ENCODE measurements at regions of chr4 and their contacts with region 1.

Region 1: DNA sequence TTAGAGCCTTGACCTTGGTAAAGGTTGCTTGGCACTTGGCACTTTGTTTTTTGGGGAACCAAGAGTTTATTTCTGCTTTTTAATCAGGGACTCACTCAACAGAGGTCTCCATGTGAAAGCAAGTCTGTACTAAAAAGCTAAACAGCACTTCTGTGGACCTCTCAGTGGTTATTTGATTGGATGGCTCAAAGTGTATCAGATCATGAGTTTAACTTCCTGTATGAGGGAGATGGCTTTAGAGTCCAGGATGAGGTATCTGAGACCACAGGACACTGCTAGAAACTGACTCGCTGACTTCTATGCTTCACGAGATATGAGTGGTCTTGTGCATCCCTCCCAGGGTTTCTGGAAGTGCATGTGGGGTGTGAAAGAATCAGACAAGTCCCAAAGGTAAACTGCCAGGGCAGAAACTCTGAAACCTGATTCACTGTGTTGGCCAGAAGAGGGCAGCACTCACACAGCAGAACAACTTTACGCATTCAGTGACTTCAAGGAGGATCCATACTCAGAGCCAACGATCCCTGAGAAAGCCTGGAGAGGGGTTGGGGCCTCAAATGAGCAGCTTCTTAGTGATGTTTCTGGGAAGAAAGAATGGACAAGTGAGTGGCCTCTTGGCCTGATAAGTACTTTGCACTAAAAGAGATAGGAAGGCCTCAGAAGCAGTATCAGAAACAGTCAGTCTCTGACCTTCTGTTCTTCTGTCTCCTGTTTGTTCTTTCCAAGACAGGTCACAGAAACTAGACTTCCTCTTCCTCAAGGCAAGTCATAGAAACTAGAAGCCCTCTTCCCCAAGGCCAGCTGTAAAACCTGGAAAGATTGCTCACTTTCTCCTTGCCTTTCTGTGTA is 220.3 kb upstream of the CXCL13 start:
- DNase-seq: peak; percentile 86
- H3K4me3 Mint-ChIP-seq: no peak overlapping the region
- H3K27ac Mint-ChIP-seq: no peak overlapping the region
- H3K4me1 Mint-ChIP-seq: peaks cover 6% of the 10 kb centered on the region
- H3K27me3 Mint-ChIP-seq: peaks cover 4% of the 10 kb centered on the region

Region 2: GRCh38 chr4:77110730-77111129 is 274.6 kb before region 1 on chr4:
- intact Hi-C with region 1: no loop called
- DNase-seq: no peak
- H3K4me3 Mint-ChIP-seq: no peak overlapping the region
- H3K27ac Mint-ChIP-seq: no peak overlapping the region
- H3K4me1 Mint-ChIP-seq: no peaks in the 10 kb centered on the region
- H3K27me3 Mint-ChIP-seq: peaks cover 28% of the 10 kb centered on the region

Region 3: GRCh38 chr4:77433418-77433733 is 48.0 kb after region 1 on chr4:
- intact Hi-C with region 1: loop called (anchors 1 kb)
- DNase-seq: peak; percentile 80
- H3K4me3 Mint-ChIP-seq: no peak overlapping the region
- H3K27ac Mint-ChIP-seq: no peak overlapping the region
- H3K4me1 Mint-ChIP-seq: peaks cover 8% of the 10 kb centered on the region
- H3K27me3 Mint-ChIP-seq: no peaks in the 10 kb centered on the region

Region 4: DNA sequence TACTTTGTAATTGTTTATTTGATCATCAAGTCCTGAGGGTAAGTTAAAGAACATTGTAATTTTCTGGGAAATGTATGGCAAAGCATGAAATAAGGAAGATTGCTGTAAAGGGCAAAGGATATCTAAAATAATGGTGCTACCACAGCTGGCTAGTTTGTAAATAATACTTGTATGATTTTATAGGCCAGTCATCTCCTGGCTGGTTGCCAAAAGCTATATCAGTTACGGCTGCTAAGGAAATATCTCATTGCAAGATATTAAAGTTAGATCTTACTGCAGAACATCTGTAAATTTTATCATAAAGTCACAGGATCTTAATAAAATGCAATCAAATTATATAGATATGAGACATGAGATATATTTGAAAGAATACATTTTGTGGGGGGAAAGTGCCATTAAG is 69.5 kb after region 1 on chr4:
- intact Hi-C with region 1: no loop called
- DNase-seq: no peak
- H3K4me3 Mint-ChIP-seq: no peak overlapping the region
- H3K27ac Mint-ChIP-seq: no peak overlapping the region
- H3K4me1 Mint-ChIP-seq: no peaks in the 10 kb centered on the region
- H3K27me3 Mint-ChIP-seq: peaks cover 3% of the 10 kb centered on the region

Region 5: DNA sequence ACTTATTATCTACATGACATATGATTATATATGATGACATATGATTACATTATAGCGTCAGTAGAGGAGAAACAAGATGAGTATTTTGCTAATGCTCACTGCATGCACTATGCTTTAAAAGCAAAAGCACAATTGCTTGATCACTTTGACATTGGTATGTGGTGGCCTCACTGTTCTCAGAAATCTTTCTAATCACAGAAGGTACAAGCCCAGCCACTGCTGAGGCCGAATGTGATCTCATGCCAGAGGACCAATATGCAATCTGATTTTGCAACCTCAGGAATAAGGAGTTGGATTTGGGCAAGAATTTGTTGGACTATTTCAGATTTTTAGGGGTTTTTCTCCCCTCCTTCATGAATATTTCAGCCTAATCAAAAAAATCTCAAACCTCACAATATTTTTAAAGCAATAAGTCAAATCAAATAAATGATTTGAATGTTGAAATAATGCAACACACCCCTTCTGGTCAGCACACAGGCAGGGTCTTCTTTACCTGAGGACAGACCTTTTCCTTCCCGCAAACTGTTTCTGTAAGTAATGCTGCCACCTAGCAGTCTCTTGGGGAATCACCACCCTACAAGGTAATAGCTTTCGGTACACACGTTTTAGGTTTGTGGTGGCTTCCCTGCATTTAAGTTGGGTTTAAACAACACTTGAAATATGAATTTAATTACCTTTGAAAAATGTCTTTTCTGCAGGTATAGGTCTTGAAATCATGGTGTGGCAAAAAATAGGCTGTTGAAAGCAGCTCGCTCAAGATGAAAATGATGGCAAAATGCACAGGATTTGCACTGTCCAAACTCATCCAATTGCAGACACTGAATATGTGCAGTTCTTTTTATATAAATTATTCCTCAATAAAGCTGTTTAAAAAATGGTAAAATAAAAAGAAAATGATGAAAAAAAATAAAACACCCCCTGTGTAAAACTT is 215.4 kb after region 1 on chr4:
- intact Hi-C with region 1: loop called (anchors 1 kb)
- DNase-seq: peak; percentile 78
- H3K4me3 Mint-ChIP-seq: no peak overlapping the region
- H3K27ac Mint-ChIP-seq: peak overlapping the region; percentile 69
- H3K4me1 Mint-ChIP-seq: peaks cover 31% of the 10 kb centered on the region
- H3K27me3 Mint-ChIP-seq: no peaks in the 10 kb centered on the region

Region 6: GRCh38 chr4:77697860-77698590 is 312.7 kb after region 1 on chr4:
- intact Hi-C with region 1: loop called (anchors 10 kb)
- DNase-seq: peak; percentile 57
- H3K4me3 Mint-ChIP-seq: no peak overlapping the region
- H3K27ac Mint-ChIP-seq: no peak overlapping the region
- H3K4me1 Mint-ChIP-seq: no peaks in the 10 kb centered on the region
- H3K27me3 Mint-ChIP-seq: peaks cover 13% of the 10 kb centered on the region